ENCODE measurements at regions of chr6 and their contacts with region 1.

Region 1: DNA sequence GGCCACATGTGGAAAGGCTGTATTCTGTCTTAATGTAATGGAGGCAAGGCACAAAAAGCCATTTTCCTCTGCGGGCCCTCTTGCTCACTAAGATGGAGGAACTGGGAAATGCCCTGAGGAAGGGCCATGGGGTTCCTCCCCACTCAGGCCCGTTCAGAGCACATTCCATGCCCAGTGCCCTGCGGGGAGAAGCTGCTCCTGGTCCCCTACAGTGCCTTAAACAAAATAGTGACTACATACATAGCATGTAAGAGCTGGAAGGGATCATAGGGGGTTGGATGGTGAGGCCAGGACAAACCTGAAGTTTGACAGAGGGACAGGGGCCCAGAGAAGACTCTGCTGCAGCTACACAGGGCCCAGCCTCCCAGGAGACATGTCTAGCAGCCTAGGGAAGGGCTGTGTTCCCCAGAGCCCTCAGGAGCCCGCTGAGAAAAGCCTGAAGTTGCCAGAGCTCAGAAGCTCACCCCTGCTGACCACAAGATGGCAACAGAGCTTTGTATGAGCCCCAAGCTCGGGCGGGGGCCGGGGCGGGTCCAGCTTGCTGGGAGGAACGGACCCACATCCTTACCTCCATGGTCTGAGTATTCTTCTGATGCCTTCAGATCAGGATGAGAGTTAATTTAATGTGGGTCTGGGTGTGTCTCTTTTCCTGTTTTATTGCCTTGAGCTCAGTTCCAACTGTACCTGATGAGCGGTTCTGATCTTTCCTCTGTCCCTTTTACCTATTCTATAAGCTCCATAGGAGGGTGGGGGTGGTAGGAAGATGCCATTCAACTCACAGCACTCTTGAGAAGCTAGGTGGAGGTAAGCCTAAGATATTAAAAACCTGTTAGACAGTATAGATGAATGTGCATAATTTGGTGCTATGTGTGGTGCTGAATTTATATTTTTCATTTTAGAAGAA is 242.9 kb downstream of the CDC5L start:
- DNase-seq: no peak
- H3K4me3 ChIP-seq: no peak overlapping the region
- CTCF ChIP-seq: peak; percentile 86

Region 2: DNA sequence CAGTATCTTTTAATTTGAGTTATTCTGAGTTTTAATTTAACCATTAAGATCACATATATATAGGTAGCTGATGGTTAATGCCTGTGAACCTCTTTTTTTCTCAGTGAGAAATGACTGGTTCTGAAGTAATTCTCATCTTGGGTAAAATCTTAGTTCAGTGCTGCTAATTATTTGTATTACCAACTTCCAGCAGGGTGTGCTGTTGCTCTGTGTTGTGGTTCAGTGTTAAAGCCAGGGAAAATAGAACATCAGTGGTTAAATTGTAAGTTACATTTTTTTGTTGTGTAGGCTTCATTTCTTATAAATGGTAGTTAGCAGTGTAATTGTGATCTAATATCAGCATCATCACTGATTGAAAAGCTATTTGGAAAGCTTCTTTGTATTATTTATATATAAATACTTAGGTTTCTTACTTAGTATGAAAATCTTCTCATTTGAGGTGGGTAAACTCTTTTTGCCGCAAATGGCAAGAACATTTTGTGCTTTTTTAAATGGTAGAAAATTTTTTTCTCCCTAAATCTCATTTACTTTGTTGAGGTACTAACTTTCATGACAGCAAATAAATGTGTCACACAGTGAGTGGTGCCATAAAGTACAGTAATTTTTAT is 199.2 kb before region 1 on chr6:
- CTCF ChIA-PET with region 1: interaction called, 11 read pairs
- POLR2A ChIA-PET with region 1: no interaction called
- DNase-seq: no peak
- H3K4me3 ChIP-seq: no peak overlapping the region
- CTCF ChIP-seq: peak; percentile 51

Region 3: DNA sequence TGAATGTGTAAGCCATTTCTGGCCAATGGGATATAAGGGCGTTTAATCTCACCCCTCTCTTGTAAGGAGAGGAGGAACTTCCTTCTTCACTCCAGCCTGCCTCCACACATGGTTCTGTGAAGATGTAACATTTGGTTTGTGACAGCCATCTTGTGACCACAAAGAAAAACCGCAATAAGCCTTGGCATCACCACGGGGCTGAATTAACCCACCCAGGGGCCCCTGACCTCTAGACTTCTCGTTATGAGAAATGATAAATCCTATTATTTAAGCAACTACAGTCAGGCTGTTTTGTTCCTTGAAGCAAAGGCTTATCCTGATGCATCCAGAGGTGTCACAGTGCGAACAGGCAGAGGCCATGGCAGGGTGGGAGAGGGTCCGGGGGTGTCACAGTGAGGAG is 103.2 kb before region 1 on chr6:
- CTCF ChIA-PET with region 1: no interaction called
- POLR2A ChIA-PET with region 1: no interaction called
- DNase-seq: no peak
- H3K4me3 ChIP-seq: no peak overlapping the region
- CTCF ChIP-seq: no peak

Region 4: DNA sequence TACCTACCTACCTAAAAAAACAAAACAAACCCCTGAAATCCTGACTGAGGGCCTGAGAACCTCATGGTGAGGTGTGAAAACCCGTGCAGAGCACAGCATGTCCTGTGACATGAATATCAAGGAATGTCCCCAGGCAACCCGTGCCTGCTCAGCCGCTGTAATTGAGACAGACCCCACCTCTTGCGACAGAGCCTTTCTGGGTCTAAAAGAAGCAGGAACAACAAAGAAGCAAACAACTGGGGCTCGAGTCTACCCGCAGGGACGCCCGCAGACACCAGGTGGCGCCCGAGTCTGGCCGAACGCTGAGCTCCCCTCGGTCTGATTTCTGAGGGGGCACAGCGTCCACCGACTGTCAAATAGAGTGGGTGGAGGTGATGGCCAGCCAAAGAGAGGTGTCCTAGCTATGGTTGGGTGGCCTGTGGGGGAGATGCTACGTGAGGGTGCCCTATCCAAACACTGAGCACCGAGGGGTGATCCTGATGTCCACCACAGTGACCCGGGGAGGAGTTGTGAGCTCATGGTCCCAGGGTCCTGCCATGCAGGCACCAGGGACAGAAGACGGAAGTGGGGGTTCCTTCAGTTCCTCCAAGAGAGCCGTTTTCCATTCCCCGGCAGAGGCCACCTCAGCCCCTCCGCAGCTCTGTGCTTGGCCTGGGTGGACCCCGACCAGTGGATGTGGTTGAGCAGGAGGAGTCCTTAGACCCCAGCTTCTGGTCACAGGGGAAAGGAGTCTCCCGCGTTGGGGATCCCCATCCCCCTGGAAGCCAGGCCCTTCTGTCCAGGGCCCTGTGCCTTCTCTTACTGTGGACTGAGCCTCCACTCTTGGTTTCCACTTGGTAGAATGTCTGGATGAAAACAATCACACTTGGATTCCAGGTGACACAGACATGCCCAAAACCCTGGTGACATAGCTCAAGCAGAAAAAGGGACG is 25.3 kb after region 1 on chr6:
- CTCF ChIA-PET with region 1: interaction called, 58 read pairs
- POLR2A ChIA-PET with region 1: no interaction called
- DNase-seq: no peak
- H3K4me3 ChIP-seq: no peak overlapping the region
- CTCF ChIP-seq: peak; percentile 92

Region 5: DNA sequence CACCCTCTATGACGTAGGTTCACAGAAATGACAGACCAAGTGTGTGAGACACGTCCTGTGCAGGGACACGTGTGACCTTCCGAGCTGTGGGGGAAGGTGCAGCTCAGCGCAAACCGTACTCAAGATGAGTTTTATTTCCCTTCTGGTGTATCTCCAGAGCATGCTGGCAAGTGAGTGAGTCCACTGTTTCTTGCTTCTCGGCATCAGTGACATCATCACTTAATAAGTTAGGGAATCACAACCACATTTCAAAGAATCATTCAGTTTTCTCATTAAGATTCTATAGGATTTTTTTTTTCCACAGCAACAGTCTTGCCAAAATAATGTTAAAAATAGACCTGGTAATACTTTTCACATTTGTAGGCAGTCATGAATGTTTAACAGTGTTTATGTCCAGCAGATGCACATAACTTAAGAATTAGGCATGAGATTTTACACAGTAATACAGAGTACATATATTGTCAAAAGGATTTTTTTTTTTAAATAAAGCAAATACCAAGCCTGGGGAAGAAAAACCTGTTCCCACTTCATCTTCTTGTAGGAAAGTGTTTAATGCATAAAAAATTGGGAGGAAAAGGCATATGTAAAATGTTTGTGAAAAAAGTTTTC is 175.0 kb after region 1 on chr6:
- CTCF ChIA-PET with region 1: no interaction called
- POLR2A ChIA-PET with region 1: no interaction called
- DNase-seq: peak; percentile 87
- H3K4me3 ChIP-seq: no peak overlapping the region
- CTCF ChIP-seq: no peak

Region 6: DNA sequence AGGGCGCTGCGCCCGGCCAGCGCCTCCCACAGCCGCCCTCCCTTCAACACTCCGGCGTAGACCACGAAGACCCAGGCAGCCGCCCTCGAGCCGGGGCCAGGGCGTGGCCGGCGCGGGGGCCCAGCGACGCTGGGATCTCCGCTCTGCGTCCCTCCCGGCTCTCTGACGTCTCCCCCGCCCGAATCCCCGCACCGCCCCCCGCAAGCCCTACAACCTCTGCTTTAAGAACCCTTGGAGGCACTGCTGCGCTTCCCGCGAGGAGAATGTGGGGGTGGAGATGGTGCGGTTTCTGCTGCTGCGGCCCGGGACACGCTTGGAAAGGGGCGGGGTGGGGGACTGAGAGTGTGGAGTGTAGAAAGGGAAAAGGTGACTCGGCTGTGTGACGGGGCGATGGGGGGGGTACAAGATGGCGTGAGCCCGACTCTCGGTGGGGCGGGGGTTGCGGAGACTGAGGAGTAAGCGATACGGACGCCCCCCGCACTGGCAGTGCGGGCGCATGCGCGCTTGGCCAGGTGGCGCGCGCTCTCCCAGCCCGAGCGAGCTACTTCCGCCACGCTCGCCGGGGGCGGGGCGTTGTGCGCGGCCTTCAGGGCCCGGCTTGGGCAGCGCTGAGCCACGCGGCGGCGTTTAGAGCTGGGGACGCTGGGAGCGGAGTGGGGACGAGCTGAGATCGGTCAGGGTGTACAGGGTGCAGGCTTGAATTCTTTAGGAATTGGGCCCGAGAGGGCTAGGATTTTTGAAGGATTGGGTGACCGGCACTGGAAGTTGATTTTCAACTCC is 747.4 kb after region 1 on chr6 and contains the start of gene SUPT3H:
- CTCF ChIA-PET with region 1: interaction called, 13 read pairs
- POLR2A ChIA-PET with region 1: no interaction called
- DNase-seq: peak; percentile 57
- H3K4me3 ChIP-seq: peak within 1 kb of the TSS; percentile 74
- CTCF ChIP-seq: peak; percentile 55

Region 7: GRCh38 chr6:45714741-45715507 is 1084.5 kb after region 1 on chr6:
- CTCF ChIA-PET with region 1: interaction called, 18 read pairs
- POLR2A ChIA-PET with region 1: interaction called, 3 read pairs
- DNase-seq: peak; percentile 68
- H3K4me3 ChIP-seq: no peak overlapping the region
- CTCF ChIP-seq: peak; percentile 78